Activated CD4-positive, alpha-beta T cell treated with anti-CD3 and anti-CD28 coated beads, Interleukin-2, amount 10 ng/mL, durations not matched to agents 24 days and 14 days (primary cell): ENCODE measurements at regions of chr6 and their contacts with region 1.

Region 1: GRCh38 chr6:2931970-2932748 is 29.1 kb upstream of the SERPINB9 start:
- DNase-seq: peak; percentile 96
- H3K4me3 Mint-ChIP-seq: peak overlapping the region; percentile 39
- H3K27ac Mint-ChIP-seq: peak overlapping the region; percentile 60
- H3K4me1 Mint-ChIP-seq: peaks cover 23% of the 10 kb centered on the region
- H3K27me3 Mint-ChIP-seq: no peaks in the 10 kb centered on the region

Region 2: DNA sequence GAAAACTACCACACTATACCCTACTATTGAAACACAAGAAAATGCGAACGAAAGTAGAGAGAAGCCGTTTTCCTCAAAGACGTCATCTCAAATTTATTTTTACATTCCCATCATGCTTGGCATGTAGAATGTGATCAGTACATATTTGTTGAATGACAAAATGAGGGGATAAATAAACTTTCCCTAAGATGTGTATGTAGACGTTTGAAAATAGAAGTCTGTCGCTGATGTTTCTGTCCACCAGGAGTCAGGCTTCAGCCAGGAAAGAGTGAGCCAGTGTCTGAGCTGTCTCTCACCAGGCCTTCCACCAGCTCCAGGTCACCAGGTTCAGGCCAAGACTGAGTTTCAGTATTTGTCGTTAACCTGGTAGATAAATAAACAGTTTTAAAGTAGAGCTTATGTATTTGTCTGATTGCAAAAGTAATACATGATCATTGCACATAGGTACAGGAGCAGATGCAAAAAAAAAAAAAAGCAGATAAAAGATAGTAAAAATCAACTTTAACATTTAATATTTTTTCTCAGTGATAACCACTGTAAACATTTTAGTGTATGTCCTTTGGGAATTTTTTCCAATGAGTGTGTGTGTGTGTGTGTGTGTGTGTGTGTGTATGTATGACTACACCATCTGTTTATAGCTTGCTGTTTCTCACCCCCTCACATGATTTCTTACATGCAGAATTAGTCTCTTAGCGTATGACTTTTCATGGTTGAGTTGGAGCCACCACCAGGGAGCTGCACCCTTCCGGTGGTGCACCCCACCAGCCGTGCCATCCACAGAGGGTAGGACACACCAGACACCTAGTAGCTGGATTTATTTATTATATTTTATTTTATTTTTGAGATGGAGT is 140.8 kb before region 1 on chr6:
- intact Hi-C with region 1: loop called (anchors 1 kb)
- DNase-seq: peak; percentile 89
- H3K4me3 Mint-ChIP-seq: peak overlapping the region; percentile 69
- H3K27ac Mint-ChIP-seq: peak overlapping the region; percentile 86
- H3K4me1 Mint-ChIP-seq: peaks cover 35% of the 10 kb centered on the region
- H3K27me3 Mint-ChIP-seq: no peaks in the 10 kb centered on the region

Region 3: GRCh38 chr6:2846873-2847224 is 85.3 kb before region 1 on chr6:
- intact Hi-C with region 1: loop called (anchors 1 kb)
- DNase-seq: no peak
- H3K4me3 Mint-ChIP-seq: peak overlapping the region; percentile 4
- H3K27ac Mint-ChIP-seq: peak overlapping the region; percentile 6
- H3K4me1 Mint-ChIP-seq: peaks cover 48% of the 10 kb centered on the region
- H3K27me3 Mint-ChIP-seq: no peaks in the 10 kb centered on the region

Region 4: DNA sequence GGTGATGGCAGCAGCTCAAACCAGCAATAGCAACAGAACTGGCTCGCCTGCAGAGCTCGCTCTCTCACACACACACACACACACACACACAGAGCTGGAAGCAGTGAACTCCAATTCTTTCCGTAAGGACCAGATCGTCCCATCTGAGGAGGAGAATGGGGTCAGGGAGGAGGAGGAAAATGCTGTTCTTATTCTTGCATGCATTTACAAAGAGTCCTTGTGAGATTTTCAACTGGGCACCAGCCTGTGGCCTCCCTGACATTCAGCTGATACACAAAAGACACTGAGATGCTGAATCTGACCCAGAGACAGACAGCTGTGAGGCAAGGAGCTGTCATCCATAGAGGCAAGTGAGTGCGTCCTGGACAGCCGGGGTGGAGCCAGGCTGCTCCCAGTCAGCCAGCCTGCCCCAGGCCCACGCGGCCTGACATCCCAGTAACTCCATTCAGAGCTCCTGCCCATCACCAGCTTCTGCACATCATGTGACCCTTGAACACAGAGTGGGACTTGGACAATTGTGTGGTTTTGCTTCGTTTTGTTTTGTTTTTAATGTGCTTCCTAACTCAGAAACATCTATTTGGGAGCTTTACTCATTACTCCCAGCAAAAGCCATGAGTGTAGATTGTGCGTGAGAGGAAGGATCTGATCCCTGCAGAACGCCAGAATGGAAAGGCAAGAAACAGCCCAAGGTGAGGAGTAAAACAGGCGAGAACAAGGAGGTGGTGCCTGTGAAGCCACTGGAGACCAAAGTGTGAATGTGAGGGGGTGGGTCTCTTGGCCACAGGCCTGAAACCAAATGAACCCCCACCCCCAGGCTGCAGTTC is 31.1 kb before region 1 on chr6:
- intact Hi-C with region 1: loop called (anchors 2 kb)
- DNase-seq: peak; percentile 63
- H3K4me3 Mint-ChIP-seq: peak overlapping the region; percentile 97
- H3K27ac Mint-ChIP-seq: peak overlapping the region; percentile 90
- H3K4me1 Mint-ChIP-seq: peaks cover 51% of the 10 kb centered on the region
- H3K27me3 Mint-ChIP-seq: no peaks in the 10 kb centered on the region

Region 5: DNA sequence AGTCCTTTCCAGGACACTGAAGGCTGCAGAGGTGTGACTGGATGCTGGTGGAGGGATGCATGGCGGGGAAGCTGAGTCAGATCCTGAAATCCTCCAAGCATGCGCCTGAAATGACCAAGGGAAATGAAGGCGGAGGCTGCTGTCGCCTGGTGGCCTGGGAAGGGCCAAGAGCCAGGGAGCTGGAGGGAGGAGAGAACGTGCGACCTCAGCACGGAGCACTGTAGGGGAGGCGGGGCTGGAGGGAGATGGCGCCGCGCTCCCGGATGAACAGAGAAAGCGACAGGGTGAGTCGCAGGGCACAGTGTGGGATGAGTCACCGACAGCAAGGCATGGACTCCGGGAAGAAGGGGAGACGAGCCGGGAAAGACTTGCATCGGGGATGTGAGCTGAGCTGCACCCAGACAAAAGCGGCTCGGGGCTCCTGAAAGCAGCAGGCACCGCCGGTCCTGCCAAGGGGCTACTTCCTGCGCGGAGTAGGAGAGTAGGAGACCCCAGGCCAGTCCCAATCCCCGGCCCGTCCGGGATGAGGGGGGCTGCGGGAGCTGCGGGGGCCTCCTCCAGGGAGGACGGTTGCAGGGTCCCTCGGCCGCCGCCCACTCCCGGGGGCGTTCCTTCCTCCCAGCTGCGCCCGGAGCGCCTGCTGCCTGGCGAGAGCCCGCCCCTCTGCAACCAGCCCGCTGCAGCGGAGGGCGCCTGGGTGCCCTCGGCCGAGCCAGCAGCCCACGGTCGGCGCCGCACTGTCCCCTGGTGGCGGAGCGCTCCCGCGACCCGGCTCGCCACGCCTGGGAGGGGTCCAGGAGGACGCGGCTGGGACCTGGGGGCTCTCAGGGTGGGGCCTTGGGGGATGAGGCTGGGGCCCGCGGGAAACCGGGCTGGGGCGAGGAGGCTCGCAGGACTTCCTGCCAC is 56.5 kb after region 1 on chr6:
- intact Hi-C with region 1: loop called (anchors 2 kb)
- DNase-seq: peak; percentile 93
- H3K4me3 Mint-ChIP-seq: peak overlapping the region; percentile 89
- H3K27ac Mint-ChIP-seq: peak overlapping the region; percentile 99
- H3K4me1 Mint-ChIP-seq: peaks cover 22% of the 10 kb centered on the region
- H3K27me3 Mint-ChIP-seq: peaks cover 3% of the 10 kb centered on the region

Region 6: GRCh38 chr6:3147914-3148757 is 216.0 kb after region 1 on chr6:
- intact Hi-C with region 1: no loop called
- DNase-seq: no peak
- H3K4me3 Mint-ChIP-seq: no peak overlapping the region
- H3K27ac Mint-ChIP-seq: no peak overlapping the region
- H3K4me1 Mint-ChIP-seq: peaks cover 6% of the 10 kb centered on the region
- H3K27me3 Mint-ChIP-seq: peaks cover 8% of the 10 kb centered on the region